ENCODE measurements at regions of chr11 and their contacts with region 1.

Region 1: DNA sequence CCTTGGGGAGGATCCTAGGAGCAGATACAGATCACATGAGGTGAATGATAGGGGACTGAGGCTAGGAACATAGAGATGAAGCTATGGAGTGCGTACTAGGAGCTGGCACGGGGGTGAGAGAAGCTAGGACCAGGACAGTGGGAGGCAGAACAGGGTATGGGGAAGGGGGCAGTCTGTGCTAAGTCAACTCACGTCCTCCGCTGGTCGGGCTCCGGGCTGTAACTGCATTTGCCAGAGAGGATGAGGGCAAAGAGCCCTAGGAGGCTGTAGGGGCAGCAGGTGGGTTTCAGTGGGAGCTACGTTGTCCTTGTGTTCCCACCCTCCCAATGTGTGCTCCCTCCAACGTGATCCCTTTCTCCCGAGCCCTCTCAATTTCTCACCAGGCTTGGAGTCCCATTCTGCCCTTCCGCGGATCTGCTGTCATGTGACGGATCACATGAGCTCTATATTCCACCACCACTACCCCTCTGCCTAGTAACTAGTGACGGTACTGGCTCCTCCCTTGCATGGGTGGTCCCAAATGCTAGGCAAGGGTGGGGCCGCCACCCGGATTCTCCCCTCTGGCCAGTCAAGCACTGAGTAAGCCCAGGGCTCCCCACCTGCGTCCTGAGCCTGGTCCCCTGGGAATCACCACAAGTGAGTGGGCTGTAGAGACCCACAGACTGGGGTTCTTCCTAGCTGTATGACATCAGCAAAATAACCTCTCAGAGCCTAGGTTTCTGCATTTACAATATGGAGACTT is at the start of gene TPP1:
- DNase-seq: peak; percentile 97
- CTCF ChIP-seq: no peak

Region 2: GRCh38 chr11:6603287-6604080 is 15.7 kb before region 1 on chr11 and contains the starts of genes ILK and RRP8:
- CTCF ChIA-PET with region 1: interaction called, 20 read pairs
- POLR2A ChIA-PET with region 1: interaction called, 10 read pairs
- DNase-seq: peak; percentile 94
- CTCF ChIP-seq: no peak

Region 3: GRCh38 chr11:6667733-6668374 is 48.7 kb after region 1 on chr11:
- CTCF ChIA-PET with region 1: interaction called, 10 read pairs
- POLR2A ChIA-PET with region 1: interaction called, 8 read pairs
- DNase-seq: no peak
- CTCF ChIP-seq: no peak

Region 4: GRCh38 chr11:7341551-7341950 is 722.4 kb after region 1 on chr11:
- CTCF ChIA-PET with region 1: no interaction called
- POLR2A ChIA-PET with region 1: no interaction called
- DNase-seq: no peak
- CTCF ChIP-seq: no peak